Activated naive CD4-positive, alpha-beta T cell treated with anti-CD3 and anti-CD28 coated beads for 36 hours (primary cell): ENCODE measurements at regions of chr3 and their contacts with region 1.

Region 1: DNA sequence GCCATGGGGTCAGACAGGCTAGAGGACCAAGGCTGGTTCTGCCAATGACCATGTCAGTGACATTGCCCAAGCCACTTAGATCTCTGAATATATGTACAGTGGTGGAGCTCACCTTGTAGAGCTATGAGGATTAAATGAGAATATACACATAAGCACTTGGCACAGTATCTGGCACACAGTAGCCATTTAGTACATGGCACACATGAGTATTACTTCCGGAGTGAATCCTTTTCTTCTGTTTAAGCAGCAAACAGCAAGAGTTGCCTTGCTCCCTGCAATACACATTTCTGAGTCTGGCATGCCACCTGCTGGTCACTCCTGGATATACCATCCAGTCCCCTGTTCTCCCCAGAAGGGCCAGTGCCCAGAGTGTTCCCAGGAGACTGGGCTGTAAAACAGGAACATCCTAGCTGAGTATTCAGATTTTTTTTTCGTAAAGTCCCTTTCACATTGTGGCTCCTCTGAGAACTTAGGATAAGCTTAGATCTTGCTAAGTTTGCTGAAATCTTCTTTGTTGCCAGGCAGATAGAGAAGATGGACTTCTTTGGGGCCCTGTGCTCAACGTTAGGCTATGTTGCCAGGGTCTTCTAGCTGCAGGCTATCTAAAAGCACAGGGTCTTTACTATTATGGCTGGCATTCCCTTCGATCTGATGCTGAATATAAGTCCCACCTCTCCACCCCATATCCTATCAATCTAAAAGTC is 203.4 kb downstream of the ADAMTS9 start:
- DNase-seq: peak; percentile 89
- H3K4me3 Mint-ChIP-seq: no peak overlapping the region
- H3K27ac Mint-ChIP-seq: no peak overlapping the region
- H3K4me1 Mint-ChIP-seq: peaks cover 3% of the 10 kb centered on the region
- H3K27me3 Mint-ChIP-seq: peaks cover 21% of the 10 kb centered on the region

Region 2: GRCh38 chr3:63349583-63350521 is 1134.6 kb before region 1 on chr3:
- CTCF ChIA-PET with region 1: no interaction called
- intact Hi-C with region 1: loop called (anchors 2 kb)
- DNase-seq: peak; percentile 64
- H3K4me3 Mint-ChIP-seq: no peak overlapping the region
- H3K27ac Mint-ChIP-seq: no peak overlapping the region
- H3K4me1 Mint-ChIP-seq: no peaks in the 10 kb centered on the region
- H3K27me3 Mint-ChIP-seq: peaks cover 32% of the 10 kb centered on the region

Region 3: DNA sequence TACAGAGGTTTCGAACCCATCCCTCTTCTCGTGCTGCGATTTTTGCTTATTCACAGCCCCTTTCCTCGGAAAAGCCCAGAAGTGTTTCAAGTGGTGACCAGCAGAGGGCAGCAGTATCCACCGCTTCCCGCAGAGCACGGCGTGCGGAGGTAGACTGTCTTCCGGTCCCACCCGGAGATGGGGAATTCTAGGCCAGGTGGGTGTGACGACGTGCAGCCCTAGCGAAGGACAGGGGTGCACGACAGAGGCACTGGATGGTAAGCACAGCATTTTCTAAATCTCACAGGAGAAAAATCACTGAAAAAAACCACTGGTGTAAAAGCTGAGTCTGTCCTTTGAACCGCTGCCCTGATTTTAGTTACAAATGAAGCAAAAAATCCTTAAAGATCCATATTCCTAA is 453.7 kb before region 1 on chr3:
- CTCF ChIA-PET with region 1: interaction called, 45 read pairs
- intact Hi-C with region 1: loop called (anchors 1 kb)
- DNase-seq: peak; percentile 83
- H3K4me3 Mint-ChIP-seq: peak overlapping the region; percentile 62
- H3K27ac Mint-ChIP-seq: peak overlapping the region; percentile 39
- H3K4me1 Mint-ChIP-seq: peaks cover 5% of the 10 kb centered on the region
- H3K27me3 Mint-ChIP-seq: peaks cover 14% of the 10 kb centered on the region

Region 4: DNA sequence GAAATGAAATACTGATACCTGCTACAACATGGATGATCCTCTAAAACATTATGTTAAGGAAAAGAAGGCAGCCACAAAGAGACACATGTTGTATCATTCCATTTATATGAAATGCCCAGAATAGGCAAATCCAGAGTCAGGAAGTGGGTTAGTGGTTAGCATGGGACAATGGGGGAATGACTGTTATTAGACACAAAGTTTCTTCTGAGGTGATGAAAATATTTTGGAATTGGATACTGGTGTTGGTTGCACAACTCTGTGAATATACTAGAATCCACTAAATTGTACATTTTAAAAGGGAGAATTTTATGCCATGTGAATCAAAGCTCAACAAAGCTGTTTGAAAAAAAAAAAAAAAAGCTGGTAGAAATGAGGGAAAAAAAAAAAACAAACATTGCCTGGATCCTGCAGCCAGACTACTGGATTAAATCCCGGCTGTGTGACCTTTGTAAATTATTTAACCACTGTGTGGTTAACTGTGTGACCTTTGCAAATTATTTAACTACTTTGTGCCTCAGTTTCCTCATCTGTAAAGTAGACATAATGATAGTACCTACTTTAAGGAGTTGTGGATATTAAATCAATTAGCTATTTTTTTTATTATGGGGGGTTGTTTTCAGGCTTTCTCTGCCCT is 183.5 kb before region 1 on chr3:
- CTCF ChIA-PET with region 1: no interaction called
- intact Hi-C with region 1: no loop called
- DNase-seq: no peak
- H3K4me3 Mint-ChIP-seq: no peak overlapping the region
- H3K27ac Mint-ChIP-seq: no peak overlapping the region
- H3K4me1 Mint-ChIP-seq: no peaks in the 10 kb centered on the region
- H3K27me3 Mint-ChIP-seq: peaks cover 5% of the 10 kb centered on the region

Region 5: GRCh38 chr3:64399205-64399800 is 85.1 kb before region 1 on chr3:
- CTCF ChIA-PET with region 1: no interaction called
- intact Hi-C with region 1: loop called (anchors 1 kb)
- DNase-seq: peak; percentile 24
- H3K4me3 Mint-ChIP-seq: no peak overlapping the region
- H3K27ac Mint-ChIP-seq: no peak overlapping the region
- H3K4me1 Mint-ChIP-seq: no peaks in the 10 kb centered on the region
- H3K27me3 Mint-ChIP-seq: no peaks in the 10 kb centered on the region

Region 6: DNA sequence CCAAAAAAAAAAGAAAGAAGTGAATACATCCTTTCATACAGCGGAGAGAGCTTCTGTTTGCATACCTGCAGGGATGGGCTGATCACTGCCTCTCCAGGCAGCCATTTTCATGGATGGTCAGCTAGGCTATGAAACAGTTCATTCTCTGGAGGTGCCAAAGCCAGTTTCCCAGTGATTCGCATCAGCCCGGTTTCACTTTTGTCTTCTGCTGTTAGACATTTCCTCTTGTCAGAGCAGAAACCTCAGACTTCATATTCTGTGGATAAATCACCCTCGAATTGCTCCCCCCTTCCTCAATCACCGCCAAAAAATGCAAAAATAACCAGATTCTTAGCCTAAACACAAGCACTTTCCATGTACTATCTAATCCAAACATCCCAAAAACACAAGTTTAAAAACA is 22.2 kb before region 1 on chr3:
- CTCF ChIA-PET with region 1: interaction called, 16 read pairs
- intact Hi-C with region 1: no loop called
- DNase-seq: peak; percentile 18
- H3K4me3 Mint-ChIP-seq: no peak overlapping the region
- H3K27ac Mint-ChIP-seq: no peak overlapping the region
- H3K4me1 Mint-ChIP-seq: peaks cover 2% of the 10 kb centered on the region
- H3K27me3 Mint-ChIP-seq: peaks cover 13% of the 10 kb centered on the region

Region 7: DNA sequence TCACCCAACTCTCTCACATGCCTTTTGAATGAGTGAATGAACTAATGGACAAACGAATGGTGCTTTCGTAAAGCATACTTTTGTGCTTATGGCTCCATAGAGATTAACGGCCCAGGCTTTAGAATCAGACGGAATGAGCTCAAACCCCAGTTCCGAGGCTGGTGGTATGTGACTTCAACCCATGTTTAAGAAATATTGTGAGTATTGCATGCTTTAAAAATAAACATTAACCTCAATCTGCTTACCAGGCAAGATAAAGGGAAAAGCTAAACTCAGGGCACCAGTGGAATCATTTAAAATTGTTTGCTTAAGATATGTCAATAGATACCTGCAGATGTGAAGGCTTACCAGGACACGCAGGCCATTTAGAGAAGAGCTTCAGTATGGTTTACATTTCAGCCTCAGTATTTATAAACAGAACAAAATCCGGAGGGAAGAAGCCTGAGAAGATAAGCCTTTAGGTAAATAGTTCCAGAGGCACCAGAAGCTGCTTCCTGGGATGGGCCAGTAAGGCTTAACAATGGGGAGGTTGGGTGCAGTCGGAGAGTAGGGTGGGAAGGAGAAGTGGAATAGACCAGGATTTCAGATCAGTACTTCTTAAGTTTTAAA is 17.0 kb after region 1 on chr3:
- CTCF ChIA-PET with region 1: interaction called, 10 read pairs
- intact Hi-C with region 1: no loop called
- DNase-seq: no peak
- H3K4me3 Mint-ChIP-seq: no peak overlapping the region
- H3K27ac Mint-ChIP-seq: no peak overlapping the region
- H3K4me1 Mint-ChIP-seq: no peaks in the 10 kb centered on the region
- H3K27me3 Mint-ChIP-seq: peaks cover 30% of the 10 kb centered on the region